ENCODE measurements at regions of chr9 and their contacts with region 1.

Region 1: GRCh38 chr9:137129456-137130175 is 9.3 kb upstream of the GRIN1 start:
- DNase-seq: peak; percentile 80 to 97 (median 88)
- ATAC-seq: peak; percentile 92
- H3K4me3 ChIP-seq: peak overlapping the region; percentile 72
- H3K4me3 Mint-ChIP-seq: peak overlapping the region; percentile 94
- H3K27ac ChIP-seq: peak overlapping the region in 1 of 2 donors; percentile 84
- H3K27ac Mint-ChIP-seq: peak overlapping the region; percentile 81
- H3K4me1 ChIP-seq: peaks cover 37% of the 10 kb centered on the region
- H3K4me1 Mint-ChIP-seq: peaks cover 30% of the 10 kb centered on the region
- H3K27me3 ChIP-seq: peaks cover 5 to 7% of the 10 kb centered on the region in 2 experiments
- H3K27me3 Mint-ChIP-seq: peaks cover 8% of the 10 kb centered on the region
- CTCF ChIP-seq: no peak

Region 2: DNA sequence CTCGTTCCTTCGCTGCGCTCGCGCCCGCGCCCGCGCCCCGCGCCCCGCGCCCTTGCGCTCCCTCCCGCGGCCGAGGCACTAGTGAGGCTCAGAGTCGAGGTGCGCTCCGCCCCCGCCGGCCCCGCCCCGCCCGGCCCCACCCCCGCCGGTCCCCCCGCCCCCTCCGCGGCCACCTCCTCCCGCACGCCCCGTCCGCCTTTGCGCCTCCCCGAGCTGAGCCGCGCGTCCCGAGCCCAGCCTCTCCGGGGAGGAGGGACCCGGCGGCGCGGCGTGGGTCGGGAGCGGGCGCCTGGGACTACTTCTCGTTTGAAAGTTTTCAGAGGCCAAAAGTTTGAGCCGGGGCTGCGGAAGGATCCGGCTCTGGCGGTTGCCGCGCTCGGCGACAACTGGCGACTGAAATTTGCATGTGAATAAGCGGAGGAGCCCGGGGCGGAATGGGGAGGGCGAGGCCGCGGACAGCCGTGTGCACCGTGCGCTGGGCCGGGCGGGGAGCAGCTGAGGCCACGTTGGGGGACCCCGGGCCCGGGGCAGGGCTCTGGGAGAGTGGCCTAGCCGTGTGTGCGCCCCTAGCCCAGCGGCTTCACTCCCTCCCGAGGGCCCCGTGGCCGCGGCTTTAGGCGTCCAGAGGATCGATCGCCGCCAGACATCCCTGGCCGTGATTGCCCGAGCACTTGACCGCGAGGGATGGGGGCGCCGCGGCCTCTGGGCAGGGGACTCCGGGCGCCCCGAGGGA is 583.5 kb before region 1 on chr9 and contains the start of gene NOTCH1:
- CTCF ChIA-PET with region 1: no interaction called
- POLR2A ChIA-PET with region 1: no interaction called
- intact Hi-C with region 1: no loop called
- DNase-seq: peak; percentile 71 to 94 (median 84)
- ATAC-seq: peak; percentile 71
- H3K4me3 ChIP-seq: peak within 1 kb of the TSS; percentile 87
- H3K4me3 Mint-ChIP-seq: peak within 1 kb of the TSS; percentile 92
- H3K27ac ChIP-seq: peak within 1 kb of the TSS in 1 of 2 donors; percentile 70
- H3K27ac Mint-ChIP-seq: peak within 1 kb of the TSS; percentile 83
- H3K4me1 ChIP-seq: peaks cover 58% of the 10 kb centered on the region
- H3K4me1 Mint-ChIP-seq: peaks cover 23% of the 10 kb centered on the region
- H3K27me3 ChIP-seq: no peaks in the 10 kb centered on the region
- H3K27me3 Mint-ChIP-seq: no peaks in the 10 kb centered on the region
- CTCF ChIP-seq: no peak
- total RNA-seq, gene NOTCH1: 30.8 to 34.2 TPM

Region 3: GRCh38 chr9:137086531-137087408 is 42.8 kb before region 1 on chr9 and contains the start of gene MAN1B1:
- CTCF ChIA-PET with region 1: interaction called, 5 read pairs
- POLR2A ChIA-PET with region 1: interaction called, 32 read pairs
- intact Hi-C with region 1: loop called in 1 of 2 experiments (anchors 5 kb)
- DNase-seq: peak; percentile 98 to 100 (median 100)
- ATAC-seq: peak; percentile 79
- H3K4me3 ChIP-seq: peak within 1 kb of the TSS; percentile 71
- H3K4me3 Mint-ChIP-seq: peak within 1 kb of the TSS; percentile 93
- H3K27ac ChIP-seq: peak within 1 kb of the TSS; percentile 79 to 90
- H3K27ac Mint-ChIP-seq: peak within 1 kb of the TSS; percentile 89
- H3K4me1 ChIP-seq: peaks cover 22% of the 10 kb centered on the region
- H3K4me1 Mint-ChIP-seq: peaks cover 32% of the 10 kb centered on the region
- H3K27me3 ChIP-seq: no peaks in the 10 kb centered on the region
- H3K27me3 Mint-ChIP-seq: no peaks in the 10 kb centered on the region
- CTCF ChIP-seq: no peak
- total RNA-seq, gene MAN1B1: 60.9 to 66.9 TPM

Region 4: GRCh38 chr9:137114610-137115391 is 14.8 kb before region 1 on chr9 and contains the start of gene DPP7:
- CTCF ChIA-PET with region 1: no interaction called
- POLR2A ChIA-PET with region 1: interaction called, 8 read pairs
- intact Hi-C with region 1: loop called in 1 of 2 experiments (anchors 1 kb)
- DNase-seq: peak; percentile 58 to 92 (median 76)
- ATAC-seq: peak; percentile 94
- H3K4me3 ChIP-seq: peak within 1 kb of the TSS; percentile 54
- H3K4me3 Mint-ChIP-seq: peak within 1 kb of the TSS; percentile 79
- H3K27ac ChIP-seq: peak within 1 kb of the TSS in 1 of 2 donors; percentile 46
- H3K27ac Mint-ChIP-seq: peak within 1 kb of the TSS; percentile 44
- H3K4me1 ChIP-seq: peaks cover 28% of the 10 kb centered on the region
- H3K4me1 Mint-ChIP-seq: no peaks in the 10 kb centered on the region
- H3K27me3 ChIP-seq: no peaks in the 10 kb centered on the region
- H3K27me3 Mint-ChIP-seq: no peaks in the 10 kb centered on the region
- CTCF ChIP-seq: no peak
- total RNA-seq, gene DPP7: 344 to 349 TPM

Region 5: DNA sequence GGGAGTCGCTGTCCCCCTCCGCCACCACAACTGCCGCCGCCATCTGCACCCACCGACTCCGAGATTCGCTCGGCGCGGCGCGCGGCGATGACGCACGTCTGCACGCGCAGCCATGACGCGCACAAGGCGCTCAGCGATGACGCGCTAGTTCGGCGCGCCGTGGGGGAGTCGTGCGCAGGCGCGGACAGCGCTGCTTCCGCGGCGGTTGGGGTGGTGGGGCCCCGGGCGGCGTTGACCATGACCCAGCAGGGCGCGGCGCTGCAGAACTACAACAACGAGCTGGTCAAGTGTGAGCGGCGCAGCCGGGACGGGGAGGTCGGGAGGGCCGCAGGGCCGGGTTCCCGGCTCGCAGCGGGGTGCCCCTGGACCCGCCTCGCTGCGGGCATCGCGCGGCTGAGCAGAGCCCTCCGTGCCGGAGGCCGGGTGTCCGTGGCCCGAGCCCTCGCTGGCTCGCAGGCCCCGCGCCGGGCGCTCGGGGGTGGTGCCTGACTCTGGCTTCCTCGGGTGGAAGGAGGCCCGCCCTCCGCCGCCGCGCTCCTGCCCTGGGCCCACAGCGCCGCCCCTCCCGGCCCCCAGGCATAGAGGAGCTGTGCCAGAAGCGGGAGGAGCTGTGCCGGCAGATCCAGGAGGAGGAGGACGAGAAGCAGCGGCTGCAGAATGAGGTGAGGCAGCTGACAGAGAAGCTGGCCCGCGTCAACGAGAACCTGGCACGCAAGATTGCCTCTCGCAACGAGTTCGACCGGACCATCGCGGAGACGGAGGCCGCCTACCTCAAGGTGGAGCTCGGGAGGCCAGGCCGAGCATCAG is 59.1 kb after region 1 on chr9 and contains the starts of genes ANAPC2 and SSNA1:
- CTCF ChIA-PET with region 1: interaction called, 5 read pairs
- POLR2A ChIA-PET with region 1: interaction called, 19 read pairs
- intact Hi-C with region 1: loop called in 1 of 2 experiments (anchors 2 kb)
- DNase-seq: peak; percentile 83 to 98 (median 90)
- ATAC-seq: peak; percentile 79
- H3K4me3 ChIP-seq: peak within 1 kb of the TSS; percentile 100
- H3K4me3 Mint-ChIP-seq: peak within 1 kb of the TSS; percentile 94
- H3K27ac ChIP-seq: peak within 1 kb of the TSS; percentile 86 to 92
- H3K27ac Mint-ChIP-seq: peak within 1 kb of the TSS; percentile 79
- H3K4me1 ChIP-seq: peaks cover 50% of the 10 kb centered on the region
- H3K4me1 Mint-ChIP-seq: peaks cover 29% of the 10 kb centered on the region
- H3K27me3 ChIP-seq: no peaks in the 10 kb centered on the region
- H3K27me3 Mint-ChIP-seq: no peaks in the 10 kb centered on the region
- CTCF ChIP-seq: peak; percentile 48
- total RNA-seq, gene ANAPC2: 144 to 149 TPM
- total RNA-seq, gene SSNA1: 30.1 to 30.5 TPM

Region 6: GRCh38 chr9:137223078-137223970 is 93.7 kb after region 1 on chr9:
- CTCF ChIA-PET with region 1: interaction called, 6 read pairs
- POLR2A ChIA-PET with region 1: interaction called, 46 read pairs
- intact Hi-C with region 1: loop called in 1 of 2 experiments (anchors 2 kb)
- DNase-seq: peak; percentile 94 to 100 (median 98)
- ATAC-seq: peak; percentile 94
- H3K4me3 ChIP-seq: peak overlapping the region; percentile 74
- H3K4me3 Mint-ChIP-seq: peak overlapping the region; percentile 87
- H3K27ac ChIP-seq: peak overlapping the region; percentile 74 to 80
- H3K27ac Mint-ChIP-seq: peak overlapping the region; percentile 81
- H3K4me1 ChIP-seq: peaks cover 36% of the 10 kb centered on the region
- H3K4me1 Mint-ChIP-seq: peaks cover 18% of the 10 kb centered on the region
- H3K27me3 ChIP-seq: peaks cover 0 to 3% of the 10 kb centered on the region in 2 experiments
- H3K27me3 Mint-ChIP-seq: peaks cover 5% of the 10 kb centered on the region
- CTCF ChIP-seq: no peak

Region 7: DNA sequence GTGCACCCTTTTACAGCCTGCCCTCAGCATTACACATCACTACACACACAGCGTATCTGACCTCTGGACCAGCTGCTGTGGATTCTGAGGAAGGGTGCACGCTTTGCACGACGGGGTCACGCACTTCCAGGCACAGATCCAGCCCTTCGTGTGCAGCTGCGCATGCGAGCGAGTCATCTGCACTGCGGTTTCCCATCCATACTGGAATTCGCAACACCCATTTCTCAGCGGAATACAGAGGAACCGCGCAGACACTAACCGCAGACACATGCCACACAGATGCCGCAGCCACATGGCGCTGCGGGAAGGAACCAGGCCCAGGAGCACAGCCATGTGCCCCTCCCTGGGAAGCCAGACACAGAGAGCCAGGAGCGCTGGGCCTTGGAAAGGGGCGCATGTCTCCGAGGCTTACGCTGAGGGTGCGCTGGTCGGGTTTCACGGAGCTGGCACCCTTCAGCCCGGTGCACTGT is 377.1 kb after region 1 on chr9:
- CTCF ChIA-PET with region 1: no interaction called
- POLR2A ChIA-PET with region 1: no interaction called
- intact Hi-C with region 1: no loop called
- DNase-seq: no peak
- ATAC-seq: no peak
- H3K4me3 ChIP-seq: no peak overlapping the region
- H3K4me3 Mint-ChIP-seq: no peak overlapping the region
- H3K27ac ChIP-seq: no peak overlapping the region
- H3K27ac Mint-ChIP-seq: no peak overlapping the region
- H3K4me1 ChIP-seq: no peaks in the 10 kb centered on the region
- H3K4me1 Mint-ChIP-seq: no peaks in the 10 kb centered on the region
- H3K27me3 ChIP-seq: no peaks in the 10 kb centered on the region
- H3K27me3 Mint-ChIP-seq: no peaks in the 10 kb centered on the region
- CTCF ChIP-seq: no peak